ENCODE measurements at regions of chr11 and their contacts with region 1.

Region 1: GRCh38 chr11:66883016-66883968 is 26.4 kb downstream of the LRFN4 start:
- DNase-seq: peak; percentile 75
- H3K4me3 ChIP-seq: no peak overlapping the region
- H3K27ac ChIP-seq: no peak overlapping the region
- H3K4me1 ChIP-seq: peaks cover 6% of the 10 kb centered on the region
- CTCF ChIP-seq: peak; percentile 86

Region 2: GRCh38 chr11:66694732-66695207 is 188.5 kb before region 1 on chr11:
- CTCF ChIA-PET with region 1: no interaction called
- POLR2A ChIA-PET with region 1: interaction called, 3 read pairs
- intact Hi-C with region 1: loop called (anchors 1 kb)
- DNase-seq: peak; percentile 88
- H3K4me3 ChIP-seq: no peak overlapping the region
- H3K27ac ChIP-seq: no peak overlapping the region
- H3K4me1 ChIP-seq: peaks cover 6% of the 10 kb centered on the region
- CTCF ChIP-seq: peak; percentile 98

Region 3: GRCh38 chr11:66835768-66836405 is 47.4 kb before region 1 on chr11:
- CTCF ChIA-PET with region 1: no interaction called
- POLR2A ChIA-PET with region 1: no interaction called
- intact Hi-C with region 1: loop called (anchors 2 kb)
- DNase-seq: no peak
- H3K4me3 ChIP-seq: no peak overlapping the region
- H3K27ac ChIP-seq: peak overlapping the region; percentile 33
- H3K4me1 ChIP-seq: peaks cover 41% of the 10 kb centered on the region
- CTCF ChIP-seq: no peak

Region 4: DNA sequence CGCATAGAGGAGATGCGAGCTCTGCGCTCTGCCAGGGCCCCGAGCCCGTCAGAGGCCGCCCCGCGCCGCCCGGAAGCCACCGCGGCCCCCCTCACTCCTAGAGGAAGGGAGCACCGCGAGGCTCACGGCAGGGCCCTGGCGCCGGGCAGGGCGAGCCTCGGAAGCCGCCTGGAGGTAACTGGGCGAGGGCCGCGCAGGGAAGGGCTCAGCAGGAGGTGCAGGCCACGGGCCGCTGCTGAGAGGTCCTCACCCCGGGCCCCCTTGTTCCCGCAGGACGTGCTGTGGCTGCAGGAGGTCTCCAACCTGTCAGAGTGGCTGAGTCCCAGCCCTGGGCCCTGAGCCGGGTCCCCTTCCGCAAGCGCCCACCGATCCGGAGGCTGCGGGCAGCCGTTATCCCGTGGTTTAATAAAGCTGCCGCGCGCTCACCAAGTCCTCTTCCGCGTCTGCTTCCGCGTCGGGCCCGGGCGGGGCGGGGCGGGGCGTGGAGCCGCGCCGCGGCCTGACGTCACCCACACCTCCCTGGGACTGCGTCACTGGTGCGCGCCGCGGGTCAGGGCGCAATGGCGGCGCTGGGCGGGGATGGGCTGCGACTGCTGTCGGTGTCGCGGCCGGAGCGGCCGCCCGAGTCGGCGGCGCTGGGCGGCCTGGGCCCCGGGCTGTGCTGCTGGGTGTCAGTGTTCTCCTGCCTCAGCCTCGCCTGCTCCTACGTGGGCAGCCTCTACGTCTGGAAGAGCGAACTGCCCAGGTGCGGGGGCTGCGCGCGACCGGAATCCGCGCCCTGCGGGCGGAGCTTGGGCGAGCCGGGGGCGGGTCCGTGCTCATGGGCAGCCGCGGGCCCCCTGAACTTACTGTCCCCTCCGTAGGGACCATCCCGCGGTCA is 40.2 kb before region 1 on chr11 and contains the start of gene RCE1:
- CTCF ChIA-PET with region 1: no interaction called
- POLR2A ChIA-PET with region 1: no interaction called
- intact Hi-C with region 1: loop called (anchors 2 kb)
- DNase-seq: peak; percentile 93
- H3K4me3 ChIP-seq: peak within 1 kb of the TSS; percentile 92
- H3K27ac ChIP-seq: peak within 1 kb of the TSS; percentile 81
- H3K4me1 ChIP-seq: peaks cover 39% of the 10 kb centered on the region
- CTCF ChIP-seq: no peak
- total RNA-seq, gene RCE1: 45.3 and 62.9 TPM in 2 replicates

Region 5: GRCh38 chr11:66855574-66856495 is 27.5 kb before region 1 on chr11:
- CTCF ChIA-PET with region 1: no interaction called
- POLR2A ChIA-PET with region 1: no interaction called
- intact Hi-C with region 1: loop called (anchors 2 kb)
- DNase-seq: peak; percentile 90
- H3K4me3 ChIP-seq: peak overlapping the region; percentile 89
- H3K27ac ChIP-seq: peak overlapping the region; percentile 72
- H3K4me1 ChIP-seq: peaks cover 50% of the 10 kb centered on the region
- CTCF ChIP-seq: no peak

Region 6: DNA sequence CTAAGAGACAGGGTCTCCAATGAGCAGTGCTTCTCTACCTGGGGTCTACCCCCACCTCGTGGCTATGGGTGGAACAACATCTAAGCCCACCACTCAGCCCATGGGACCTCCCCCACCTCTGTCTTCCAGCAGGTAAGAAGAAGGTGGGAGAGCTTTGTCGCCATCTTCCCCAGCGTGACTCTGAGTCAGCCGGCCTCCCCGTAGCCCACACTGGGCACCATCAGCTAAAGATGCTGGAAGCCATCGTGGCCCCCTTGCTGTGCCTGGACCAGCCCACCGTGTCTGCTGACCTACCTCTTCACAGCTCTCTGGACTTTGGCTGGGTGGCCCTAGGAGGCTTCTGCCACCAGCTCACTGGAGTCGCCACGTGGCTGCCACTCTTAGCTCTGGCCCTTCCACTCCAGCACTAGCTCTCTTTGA is 92.8 kb after region 1 on chr11:
- CTCF ChIA-PET with region 1: no interaction called
- POLR2A ChIA-PET with region 1: no interaction called
- intact Hi-C with region 1: loop called (anchors 5 kb)
- DNase-seq: peak; percentile 29
- H3K4me3 ChIP-seq: no peak overlapping the region
- H3K27ac ChIP-seq: no peak overlapping the region
- H3K4me1 ChIP-seq: no peaks in the 10 kb centered on the region
- CTCF ChIP-seq: peak; percentile 82

Measured in OCI-LY7 (cell line).